ENCODE measurements at regions of chr15 and their contacts with region 1.

Region 1: GRCh38 chr15:76973362-76973743 is 21.6 kb upstream of the PSTPIP1 start:
- DNase-seq: no peak
- H3K4me3 Mint-ChIP-seq: no peak overlapping the region
- H3K27ac Mint-ChIP-seq: no peak overlapping the region
- H3K4me1 Mint-ChIP-seq: peaks cover 36% of the 10 kb centered on the region
- H3K27me3 Mint-ChIP-seq: peaks cover 4% of the 10 kb centered on the region

Region 2: DNA sequence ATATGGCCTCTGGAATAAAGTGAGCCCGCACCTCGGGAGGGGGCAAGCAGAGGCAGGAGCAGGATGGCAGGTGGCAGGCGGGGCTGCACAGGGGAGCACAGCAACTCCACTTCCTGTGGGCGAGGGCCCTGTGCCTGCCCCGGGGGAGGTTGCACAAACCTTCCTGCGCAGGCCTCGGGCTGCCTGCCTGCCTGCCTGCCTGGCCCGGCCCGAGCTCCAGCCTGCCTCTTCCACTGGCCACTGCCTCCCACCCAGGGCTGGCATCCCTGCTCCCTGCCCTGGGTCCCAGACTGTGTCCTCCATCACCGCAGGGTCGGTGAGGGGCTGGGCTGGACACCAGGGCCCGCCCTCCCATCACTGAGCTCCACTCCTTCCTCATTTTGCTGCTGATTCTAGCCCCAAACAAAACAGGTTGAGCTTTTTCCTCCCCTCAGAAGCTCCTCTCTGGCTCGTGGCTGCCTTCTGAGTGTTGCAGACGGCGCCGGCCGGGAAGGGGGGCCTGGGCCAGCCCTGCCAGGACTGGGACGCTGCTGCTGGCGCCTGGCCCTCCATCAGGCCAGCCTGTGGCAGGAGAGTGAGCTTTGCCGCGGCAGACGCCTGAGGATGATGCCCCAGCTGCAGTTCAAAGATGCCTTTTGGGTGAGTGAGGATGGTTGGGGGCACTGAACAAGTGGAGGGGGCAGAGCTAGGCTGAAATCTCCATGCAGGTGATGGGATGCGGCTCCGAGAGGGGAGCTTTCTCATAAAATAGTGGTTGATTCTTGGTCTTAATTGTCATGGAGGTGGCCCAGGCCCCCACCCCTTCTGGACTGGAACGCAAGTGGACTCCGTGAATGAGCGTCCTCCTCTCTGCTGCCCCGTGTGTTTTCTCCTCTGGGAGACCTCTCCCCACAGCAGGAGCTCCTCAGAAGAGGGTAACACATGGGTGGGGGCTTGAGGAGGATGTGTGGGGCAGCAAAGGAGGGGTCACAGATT is 21.9 kb after region 1 on chr15 and contains the start of gene PSTPIP1:
- intact Hi-C with region 1: loop called (anchors 2 kb)
- DNase-seq: peak; percentile 64
- H3K4me3 Mint-ChIP-seq: peak within 1 kb of the TSS; percentile 95
- H3K27ac Mint-ChIP-seq: peak within 1 kb of the TSS; percentile 89
- H3K4me1 Mint-ChIP-seq: peaks cover 81% of the 10 kb centered on the region
- H3K27me3 Mint-ChIP-seq: no peaks in the 10 kb centered on the region
- total RNA-seq, gene PSTPIP1: 218 and 226 TPM in 2 replicates

Region 3: GRCh38 chr15:77024271-77025082 is 51.1 kb after region 1 on chr15:
- intact Hi-C with region 1: loop called (anchors 1 kb)
- DNase-seq: peak; percentile 49
- H3K4me3 Mint-ChIP-seq: peak overlapping the region; percentile 33
- H3K27ac Mint-ChIP-seq: peak overlapping the region; percentile 98
- H3K4me1 Mint-ChIP-seq: peaks cover 61% of the 10 kb centered on the region
- H3K27me3 Mint-ChIP-seq: no peaks in the 10 kb centered on the region

Region 4: DNA sequence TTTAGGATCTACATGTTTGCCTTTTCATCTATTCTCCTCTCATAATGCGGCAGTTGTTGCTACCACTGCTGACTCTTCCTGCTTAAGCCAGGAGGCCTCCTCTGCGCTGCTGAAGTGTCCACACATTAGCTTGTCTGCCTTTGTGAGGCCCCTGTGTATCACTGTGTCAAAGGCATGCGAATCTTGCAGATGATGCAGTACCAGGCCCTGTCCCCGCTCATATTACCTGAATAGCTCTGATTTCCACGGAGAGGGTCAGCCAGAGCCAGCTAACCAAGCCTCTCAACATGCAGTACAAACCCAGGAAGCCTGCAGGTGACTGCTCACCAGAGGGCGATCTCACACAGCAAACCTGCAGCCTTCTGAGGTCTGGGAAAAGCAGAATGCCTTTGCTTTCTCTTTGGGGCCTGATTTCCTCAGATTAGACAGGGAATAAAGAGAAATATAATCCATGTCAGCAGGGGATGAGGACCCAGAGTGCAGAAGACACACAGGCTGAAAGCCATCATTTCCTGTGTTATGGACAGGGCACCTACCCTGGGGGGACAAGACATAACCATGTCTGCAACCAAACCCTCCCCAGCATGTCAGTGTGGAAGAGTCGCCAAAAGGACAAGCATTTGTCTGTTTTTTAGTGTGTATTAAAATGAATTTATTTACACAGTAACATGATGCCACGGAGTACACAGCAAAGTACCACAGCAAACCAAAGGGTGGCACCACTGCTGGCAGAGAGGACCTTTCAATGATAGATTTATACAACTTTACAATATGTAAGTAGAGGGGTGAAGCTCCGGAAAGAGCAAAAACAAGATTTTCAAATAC is 134.4 kb after region 1 on chr15:
- intact Hi-C with region 1: loop called (anchors 5 kb)
- DNase-seq: peak; percentile 9
- H3K4me3 Mint-ChIP-seq: no peak overlapping the region
- H3K27ac Mint-ChIP-seq: no peak overlapping the region
- H3K4me1 Mint-ChIP-seq: no peaks in the 10 kb centered on the region
- H3K27me3 Mint-ChIP-seq: no peaks in the 10 kb centered on the region

Region 5: DNA sequence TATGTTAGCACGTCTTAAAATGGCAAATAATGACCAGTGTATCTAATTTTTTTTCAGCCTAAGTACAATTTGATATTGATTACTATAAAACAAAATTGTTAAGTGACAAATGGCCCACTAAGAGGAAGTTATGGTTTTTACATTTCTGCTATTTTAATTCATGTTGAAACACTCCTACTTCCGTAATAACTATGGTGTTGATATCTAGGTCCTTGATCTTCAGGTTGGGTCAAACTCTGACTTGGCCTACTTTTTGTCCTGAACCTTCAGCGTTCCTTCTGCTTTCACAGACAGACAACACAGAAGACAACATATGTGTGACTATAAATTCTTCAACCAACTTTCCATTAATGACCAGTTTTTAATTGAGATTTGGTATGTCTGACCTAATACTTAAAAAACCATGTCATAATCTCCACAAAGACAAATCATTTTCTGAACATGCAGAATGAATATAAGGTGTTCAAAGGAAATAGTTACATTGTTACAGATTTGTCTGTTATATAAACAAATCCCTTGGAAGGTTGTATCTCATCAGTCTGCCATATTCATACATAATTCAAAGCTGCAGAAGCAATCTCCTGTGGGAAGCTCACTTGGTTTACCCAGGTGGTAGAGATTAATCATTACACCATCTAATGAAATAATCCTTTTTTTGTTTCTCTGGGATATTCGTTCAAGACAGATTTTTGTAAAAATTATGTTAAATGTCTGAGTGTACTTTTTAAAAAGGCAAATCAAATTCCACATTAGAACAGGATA is 189.7 kb after region 1 on chr15:
- intact Hi-C with region 1: no loop called
- DNase-seq: no peak
- H3K4me3 Mint-ChIP-seq: no peak overlapping the region
- H3K27ac Mint-ChIP-seq: no peak overlapping the region
- H3K4me1 Mint-ChIP-seq: peaks cover 38% of the 10 kb centered on the region
- H3K27me3 Mint-ChIP-seq: no peaks in the 10 kb centered on the region

Region 6: DNA sequence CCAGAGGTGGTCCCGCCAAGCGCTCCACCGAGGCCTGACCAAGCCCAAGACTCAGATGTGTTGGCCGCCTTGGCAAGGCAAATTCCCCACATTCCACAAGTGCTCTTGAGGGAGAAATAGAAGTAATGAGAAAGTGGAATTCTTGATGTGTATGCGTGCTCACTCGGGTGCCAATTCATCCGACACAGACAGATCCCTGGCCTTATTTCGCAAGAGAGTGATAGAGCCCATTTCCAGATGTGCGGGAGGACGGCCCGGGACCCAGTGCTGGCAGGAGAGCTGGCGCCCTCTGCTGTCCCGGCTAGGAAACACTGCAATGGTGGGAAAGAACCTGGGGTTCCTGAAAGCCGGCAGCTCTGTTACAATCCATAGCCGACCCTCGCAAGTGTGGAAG is 523.4 kb after region 1 on chr15:
- intact Hi-C with region 1: loop called (anchors 5 kb)
- DNase-seq: peak; percentile 54
- H3K4me3 Mint-ChIP-seq: no peak overlapping the region
- H3K27ac Mint-ChIP-seq: no peak overlapping the region
- H3K4me1 Mint-ChIP-seq: peaks cover 20% of the 10 kb centered on the region
- H3K27me3 Mint-ChIP-seq: no peaks in the 10 kb centered on the region

Measured in activated T-helper 1 cell treated with anti-CD3 and anti-CD28 coated beads, Interleukin-12 subunit alpha, Interleukin-12 subunit beta, Interleukin-2, Interleukin-4 antibody, amounts not matched to agents 30 ng/mL and 10 ng/mL and 1 ng/mL, durations not matched to agents 14 hours and 24 hours and 36 hours (primary cell).